ENCODE measurements at regions of chr22 and their contacts with region 1.

Region 1: GRCh38 chr22:21867528-21868266 is at the start of gene MAPK1:
- DNase-seq: peak; percentile 94
- H3K4me3 Mint-ChIP-seq: peak within 1 kb of the TSS; percentile 91
- H3K27ac Mint-ChIP-seq: peak within 1 kb of the TSS; percentile 97
- H3K4me1 Mint-ChIP-seq: peaks cover 44% of the 10 kb centered on the region
- H3K27me3 Mint-ChIP-seq: no peaks in the 10 kb centered on the region
- total RNA-seq, gene MAPK1: 74.0 to 82.6 TPM

Region 2: DNA sequence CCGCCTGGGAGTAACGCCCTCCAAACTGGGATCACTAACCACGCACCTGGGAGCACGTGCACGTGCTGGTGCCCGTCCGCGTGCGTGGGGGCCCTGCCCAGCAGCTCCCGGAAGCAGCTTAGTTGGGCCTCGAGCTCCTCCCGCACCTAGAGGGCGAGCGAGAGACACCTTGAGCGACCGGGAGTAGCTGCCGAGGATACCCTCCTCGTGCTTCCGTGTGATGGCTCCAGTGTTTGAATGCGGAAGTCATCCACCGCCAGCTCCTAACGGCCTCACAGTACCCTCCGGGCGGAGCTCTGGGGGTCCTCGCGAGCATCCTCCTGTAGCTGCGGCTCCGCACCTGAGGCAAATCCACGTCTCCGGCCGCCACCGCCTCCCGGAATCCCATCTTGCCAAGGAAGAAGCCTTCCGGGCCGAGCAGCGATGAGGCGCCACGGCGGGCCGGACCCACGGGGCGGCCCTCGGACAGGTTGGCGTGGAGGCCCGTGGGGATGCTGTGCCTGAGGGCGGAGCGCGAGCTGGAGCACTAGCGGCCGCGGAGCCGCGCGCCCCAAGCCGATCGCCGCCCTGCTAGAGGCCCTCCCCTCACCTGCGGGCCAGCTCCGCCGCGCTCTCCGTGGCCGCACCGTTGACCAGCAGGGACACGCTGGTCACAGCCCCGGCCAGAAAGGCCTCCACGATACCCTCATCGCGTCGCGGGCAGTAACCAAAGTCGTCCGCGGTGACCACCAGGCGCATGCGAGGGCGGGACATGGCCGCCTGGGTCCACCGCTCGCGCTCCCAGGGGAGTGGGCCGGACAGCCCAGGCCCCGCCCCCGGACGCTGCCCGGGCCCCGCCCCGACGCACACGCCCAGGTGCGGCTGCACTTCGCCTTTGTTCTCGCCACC is 238.2 kb before region 1 on chr22 and contains the start of gene YDJC:
- CTCF ChIA-PET with region 1: no interaction called
- intact Hi-C with region 1: loop called (anchors 1 kb)
- DNase-seq: peak; percentile 97
- H3K4me3 Mint-ChIP-seq: peak within 1 kb of the TSS; percentile 86
- H3K27ac Mint-ChIP-seq: peak within 1 kb of the TSS; percentile 92
- H3K4me1 Mint-ChIP-seq: peaks cover 35% of the 10 kb centered on the region
- H3K27me3 Mint-ChIP-seq: no peaks in the 10 kb centered on the region
- total RNA-seq, gene YDJC: 50.3 to 53.2 TPM

Region 3: GRCh38 chr22:21666786-21667185 is 200.9 kb before region 1 on chr22:
- CTCF ChIA-PET with region 1: no interaction called
- intact Hi-C with region 1: loop called (anchors 5 kb)
- DNase-seq: no peak
- H3K4me3 Mint-ChIP-seq: peak overlapping the region; percentile 100
- H3K27ac Mint-ChIP-seq: peak overlapping the region; percentile 95
- H3K4me1 Mint-ChIP-seq: peaks cover 28% of the 10 kb centered on the region
- H3K27me3 Mint-ChIP-seq: no peaks in the 10 kb centered on the region

Region 4: DNA sequence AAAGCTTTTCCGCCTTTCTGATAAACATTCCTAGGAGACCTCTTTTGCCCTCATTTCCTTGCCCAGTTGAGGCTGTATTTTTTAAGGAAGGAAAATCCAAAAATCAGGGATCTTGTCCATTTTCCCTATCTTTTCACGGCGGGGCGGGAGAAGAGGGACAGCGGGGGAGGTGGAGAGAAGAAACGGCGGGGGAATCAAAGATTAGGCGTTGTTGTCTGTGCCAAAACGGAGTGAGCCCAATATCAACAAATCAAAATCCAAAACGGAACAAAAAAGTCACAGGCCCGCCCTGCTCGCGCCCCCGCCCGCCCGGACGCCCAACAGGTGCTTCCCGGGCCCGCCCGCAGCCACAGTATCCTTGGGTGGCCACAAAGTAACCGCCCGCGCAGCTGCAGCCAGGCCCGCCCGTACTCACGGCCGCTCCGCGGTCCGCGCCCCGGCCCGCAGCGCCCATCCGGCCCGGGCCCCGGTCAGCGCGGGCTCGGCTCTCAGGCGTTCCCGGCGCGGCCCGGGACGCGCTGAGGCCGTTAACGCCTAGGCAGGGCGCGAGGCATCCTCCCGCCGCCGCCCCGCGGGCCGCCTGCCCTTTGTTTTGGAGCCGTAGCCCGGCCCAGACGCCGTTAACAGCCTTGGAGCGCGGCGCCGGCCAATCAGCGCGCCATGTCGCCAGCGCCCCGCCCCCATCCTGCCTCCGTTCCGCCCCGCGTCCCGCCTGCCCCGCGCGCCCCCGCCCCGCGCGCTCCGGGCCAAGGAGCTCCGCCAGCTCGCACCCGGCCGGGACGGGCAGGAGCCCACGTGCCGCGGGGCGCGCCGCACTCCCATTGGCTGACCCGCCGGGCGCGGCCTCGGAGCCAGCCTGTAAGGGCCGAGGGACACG is 132.3 kb before region 1 on chr22 and contains the start of gene YPEL1:
- CTCF ChIA-PET with region 1: no interaction called
- intact Hi-C with region 1: loop called (anchors 2 kb)
- DNase-seq: peak; percentile 91
- H3K4me3 Mint-ChIP-seq: peak within 1 kb of the TSS; percentile 82
- H3K27ac Mint-ChIP-seq: no peak within 1 kb of the TSS
- H3K4me1 Mint-ChIP-seq: peaks cover 12% of the 10 kb centered on the region
- H3K27me3 Mint-ChIP-seq: peaks cover 3% of the 10 kb centered on the region
- total RNA-seq, gene YPEL1: 0.88 to 1.6 TPM

Region 5: GRCh38 chr22:21791635-21792625 is 75.8 kb before region 1 on chr22:
- CTCF ChIA-PET with region 1: no interaction called
- intact Hi-C with region 1: loop called (anchors 2 kb)
- DNase-seq: peak; percentile 36
- H3K4me3 Mint-ChIP-seq: no peak overlapping the region
- H3K27ac Mint-ChIP-seq: no peak overlapping the region
- H3K4me1 Mint-ChIP-seq: peaks cover 16% of the 10 kb centered on the region
- H3K27me3 Mint-ChIP-seq: no peaks in the 10 kb centered on the region

Region 6: DNA sequence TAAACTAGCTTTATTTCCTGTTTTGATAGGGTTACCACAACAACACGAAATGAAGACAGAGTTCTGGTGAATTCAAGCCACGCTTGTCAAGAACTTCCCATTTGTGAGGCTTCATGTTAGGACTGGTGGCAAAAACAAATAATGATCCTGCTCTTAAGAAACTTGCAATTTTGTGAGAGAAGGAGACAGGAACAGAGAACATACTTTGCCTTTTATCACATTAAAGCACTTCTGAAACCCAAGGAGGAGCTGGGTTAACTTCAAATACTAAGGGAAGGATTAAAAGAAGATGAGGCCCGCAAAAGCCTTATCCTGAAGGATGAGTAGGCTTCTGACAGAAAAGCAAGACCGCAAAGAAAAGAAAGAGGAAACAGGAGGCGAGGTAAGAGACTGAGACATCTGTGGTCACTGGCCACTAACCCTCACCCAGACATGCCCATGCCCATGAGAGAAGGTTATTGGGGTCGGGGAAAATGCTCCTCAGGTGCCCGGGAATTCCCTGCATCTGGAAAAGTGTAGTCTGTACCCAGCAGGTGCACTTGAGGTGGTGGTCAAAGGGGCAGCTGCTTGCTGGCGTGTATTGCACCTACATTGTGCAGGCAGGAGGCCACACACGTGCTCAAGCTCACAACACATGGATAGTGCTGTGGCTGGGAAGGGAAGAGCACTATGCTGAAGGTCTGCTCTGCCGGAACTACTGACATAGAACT is 50.8 kb before region 1 on chr22:
- CTCF ChIA-PET with region 1: no interaction called
- intact Hi-C with region 1: loop called (anchors 1 kb)
- DNase-seq: peak; percentile 40
- H3K4me3 Mint-ChIP-seq: no peak overlapping the region
- H3K27ac Mint-ChIP-seq: peak overlapping the region; percentile 73
- H3K4me1 Mint-ChIP-seq: peaks cover 59% of the 10 kb centered on the region
- H3K27me3 Mint-ChIP-seq: no peaks in the 10 kb centered on the region

Region 7: GRCh38 chr22:21938071-21938822 is 70.5 kb after region 1 on chr22:
- CTCF ChIA-PET with region 1: interaction called, 4 read pairs
- intact Hi-C with region 1: loop called (anchors 1 kb)
- DNase-seq: peak; percentile 92
- H3K4me3 Mint-ChIP-seq: peak overlapping the region; percentile 64
- H3K27ac Mint-ChIP-seq: peak overlapping the region; percentile 64
- H3K4me1 Mint-ChIP-seq: peaks cover 40% of the 10 kb centered on the region
- H3K27me3 Mint-ChIP-seq: no peaks in the 10 kb centered on the region

Measured in activated naive CD4-positive, alpha-beta T cell treated with anti-CD3 and anti-CD28 coated beads for 36 hours (primary cell).